ENCODE measurements at regions of chr11 and their contacts with region 1.

Region 1: DNA sequence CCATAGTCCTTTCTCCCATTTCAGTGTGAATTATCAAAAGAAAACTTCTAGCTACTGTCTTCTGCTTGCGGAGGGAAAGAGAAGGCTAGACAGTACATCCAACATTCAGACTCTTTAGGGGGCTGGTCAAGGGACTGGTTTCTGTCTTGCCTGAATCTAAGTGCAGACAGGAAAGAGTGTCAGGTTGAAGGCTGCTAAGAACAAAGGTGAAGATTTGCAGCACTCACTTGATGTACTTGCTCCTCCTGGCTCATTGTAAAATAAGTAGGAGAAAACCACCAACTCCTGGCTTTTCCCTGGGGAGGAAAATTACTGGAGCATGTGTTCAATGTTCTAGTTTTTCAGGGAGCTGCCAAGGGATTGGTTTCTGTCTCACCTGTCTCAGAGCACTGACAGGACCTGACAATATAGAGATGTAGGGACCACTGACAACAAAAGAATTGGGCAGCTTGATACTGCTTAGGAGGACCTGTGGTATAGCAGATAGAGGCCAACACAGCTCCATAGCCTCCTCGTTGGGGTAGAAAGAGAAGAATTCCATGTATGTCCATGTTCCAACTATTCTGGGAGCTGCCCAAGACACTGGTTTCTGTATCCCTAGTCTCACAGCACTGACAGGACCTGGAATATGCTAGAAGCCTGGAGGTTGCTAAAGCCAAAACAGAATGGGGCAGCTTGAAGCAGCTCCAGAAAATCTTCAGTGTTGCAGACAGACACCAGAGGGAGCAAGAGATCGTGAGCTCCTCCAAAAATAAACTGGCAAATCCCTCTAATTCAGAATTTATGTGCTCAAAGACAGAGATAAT is 39.7 kb upstream of the MMP12 start:
- DNase-seq: peak; percentile 54
- H3K4me3 Mint-ChIP-seq: no peak overlapping the region
- H3K27ac Mint-ChIP-seq: no peak overlapping the region
- H3K4me1 Mint-ChIP-seq: peaks cover 20% of the 10 kb centered on the region
- H3K27me3 Mint-ChIP-seq: no peaks in the 10 kb centered on the region
- CTCF ChIP-seq: peak; percentile 61

Region 2: GRCh38 chr11:102599642-102600261 is 314.7 kb before region 1 on chr11:
- CTCF ChIA-PET with region 1: no interaction called
- POLR2A ChIA-PET with region 1: no interaction called
- intact Hi-C with region 1: no loop called
- DNase-seq: peak; percentile 92
- H3K4me3 Mint-ChIP-seq: peak overlapping the region; percentile 31
- H3K27ac Mint-ChIP-seq: peak overlapping the region; percentile 88
- H3K4me1 Mint-ChIP-seq: peaks cover 37% of the 10 kb centered on the region
- H3K27me3 Mint-ChIP-seq: no peaks in the 10 kb centered on the region
- CTCF ChIP-seq: no peak

Region 3: DNA sequence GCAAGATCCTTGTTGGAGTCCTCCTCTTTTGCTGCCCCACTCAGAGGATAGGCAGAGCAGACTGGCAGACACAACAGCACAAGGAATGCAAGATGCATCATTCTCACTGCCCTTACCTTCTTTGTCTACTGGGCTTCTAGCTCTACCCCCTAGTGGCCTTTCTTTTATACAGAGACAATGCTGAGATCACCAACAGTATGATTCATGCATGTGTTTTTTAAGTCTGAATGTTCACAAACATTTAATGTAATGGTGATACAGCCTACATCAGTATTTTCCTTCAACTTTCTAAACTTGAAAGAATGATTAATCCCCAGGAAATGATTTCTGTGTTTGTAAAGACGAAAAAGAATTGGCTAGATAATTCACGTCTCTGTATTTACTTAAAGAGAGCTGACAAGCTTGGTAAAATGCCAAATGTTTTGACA is 133.9 kb before region 1 on chr11 and contains the start of gene MMP10:
- CTCF ChIA-PET with region 1: interaction called, 11 read pairs
- POLR2A ChIA-PET with region 1: interaction called, 3 read pairs
- intact Hi-C with region 1: no loop called
- DNase-seq: peak; percentile 65
- H3K4me3 Mint-ChIP-seq: no peak within 1 kb of the TSS
- H3K27ac Mint-ChIP-seq: no peak within 1 kb of the TSS
- H3K4me1 Mint-ChIP-seq: peaks cover 13% of the 10 kb centered on the region
- H3K27me3 Mint-ChIP-seq: no peaks in the 10 kb centered on the region
- CTCF ChIP-seq: peak; percentile 39
- total RNA-seq, gene MMP10: 0.29 and 0.75 TPM in 2 replicates

Region 4: DNA sequence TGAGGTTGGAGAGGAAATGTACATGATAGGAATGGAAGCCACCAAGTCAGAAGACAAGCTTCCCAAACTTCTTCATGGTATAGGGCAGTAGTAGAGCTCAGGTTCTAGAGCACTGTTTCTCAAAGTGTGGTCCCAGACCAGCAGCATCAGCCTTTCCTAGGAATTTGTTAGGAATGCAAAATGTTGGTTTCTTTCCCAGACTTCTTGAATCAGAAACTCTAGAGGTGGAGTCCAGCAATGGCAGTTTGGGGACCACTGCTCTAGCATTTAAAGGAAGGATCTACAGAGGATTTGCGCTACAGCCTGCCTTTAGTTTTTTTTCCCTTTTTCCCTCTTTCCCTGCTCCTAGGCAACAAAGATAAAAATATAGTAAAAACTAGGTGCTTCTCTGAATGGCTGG is 22.7 kb before region 1 on chr11:
- CTCF ChIA-PET with region 1: interaction called, 13 read pairs
- POLR2A ChIA-PET with region 1: no interaction called
- intact Hi-C with region 1: no loop called
- DNase-seq: no peak
- H3K4me3 Mint-ChIP-seq: no peak overlapping the region
- H3K27ac Mint-ChIP-seq: no peak overlapping the region
- H3K4me1 Mint-ChIP-seq: peaks cover 10% of the 10 kb centered on the region
- H3K27me3 Mint-ChIP-seq: no peaks in the 10 kb centered on the region
- CTCF ChIP-seq: no peak

Region 5: GRCh38 chr11:102935514-102935913 is 21.1 kb after region 1 on chr11:
- CTCF ChIA-PET with region 1: interaction called, 71 read pairs
- POLR2A ChIA-PET with region 1: interaction called, 11 read pairs
- intact Hi-C with region 1: loop called (anchors 2 kb)
- DNase-seq: no peak
- H3K4me3 Mint-ChIP-seq: no peak overlapping the region
- H3K27ac Mint-ChIP-seq: no peak overlapping the region
- H3K4me1 Mint-ChIP-seq: no peaks in the 10 kb centered on the region
- H3K27me3 Mint-ChIP-seq: no peaks in the 10 kb centered on the region
- CTCF ChIP-seq: no peak

Region 6: DNA sequence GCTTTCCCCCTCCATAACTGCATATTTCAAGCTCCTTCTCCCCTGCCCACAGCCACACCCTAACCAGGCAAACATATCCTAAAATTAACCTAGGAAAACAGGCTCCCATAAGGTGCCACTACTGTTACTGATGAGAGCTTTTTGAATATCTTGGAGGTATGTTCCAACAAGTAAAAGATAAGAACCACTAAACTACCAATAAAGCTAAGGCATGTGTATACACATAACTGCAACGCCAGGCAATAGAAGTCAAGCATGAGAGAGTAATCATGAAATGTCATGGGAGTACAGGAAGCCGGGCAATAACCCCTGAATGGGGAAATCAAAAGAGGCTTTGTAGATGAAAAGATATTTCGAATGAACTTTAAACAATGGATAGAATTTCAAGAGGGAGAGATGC is 31.8 kb after region 1 on chr11:
- CTCF ChIA-PET with region 1: interaction called, 71 read pairs
- POLR2A ChIA-PET with region 1: interaction called, 11 read pairs
- intact Hi-C with region 1: loop called (anchors 2 kb)
- DNase-seq: no peak
- H3K4me3 Mint-ChIP-seq: no peak overlapping the region
- H3K27ac Mint-ChIP-seq: no peak overlapping the region
- H3K4me1 Mint-ChIP-seq: peaks cover 10% of the 10 kb centered on the region
- H3K27me3 Mint-ChIP-seq: no peaks in the 10 kb centered on the region
- CTCF ChIP-seq: no peak